HEK293 (cell line): ENCODE measurements at regions of chr1 and their contacts with region 1.

Region 1: DNA sequence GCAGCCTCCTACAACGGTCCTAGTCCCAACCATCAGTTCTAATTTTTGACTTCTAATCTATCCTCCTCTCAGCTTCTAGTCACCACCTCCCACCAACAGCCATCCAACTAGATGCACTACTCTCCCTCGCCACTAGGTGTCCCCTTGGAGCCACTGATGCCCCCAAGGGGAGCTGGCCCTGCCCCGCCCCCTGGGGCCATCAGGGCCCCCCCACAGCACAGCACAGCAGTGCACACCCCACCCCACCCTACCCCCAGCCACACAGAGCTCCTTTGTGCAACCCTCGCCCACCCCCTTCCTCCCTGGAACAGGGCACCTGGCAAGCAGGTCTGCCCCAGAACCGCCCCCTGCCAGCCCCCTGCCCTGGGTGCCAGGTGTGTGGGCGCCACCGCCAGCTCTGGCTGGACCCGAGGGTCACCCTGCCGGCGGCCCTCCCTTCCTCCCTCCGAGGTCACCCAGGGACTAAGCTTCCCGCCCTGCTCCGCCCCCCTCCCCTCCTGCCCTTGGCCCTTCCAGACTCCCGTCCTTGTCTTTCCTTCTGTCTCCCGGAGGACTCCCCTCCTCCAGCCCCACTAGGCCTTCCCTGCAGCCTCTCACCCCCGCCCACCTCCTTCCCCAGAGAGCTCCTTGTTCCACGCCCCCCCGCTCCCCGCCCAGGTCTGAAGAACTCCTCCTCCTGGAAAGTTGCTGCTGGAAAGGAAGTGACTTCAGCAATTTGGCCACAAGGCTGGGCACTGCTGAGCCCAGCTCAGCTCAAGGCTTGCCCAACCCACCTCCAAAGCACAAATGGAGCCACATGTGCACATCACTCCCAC is 47.0 kb downstream of the AHDC1 start:
- H3K4me3 ChIP-seq: peak overlapping the region; percentile 10
- H3K27ac ChIP-seq: no peak overlapping the region
- H3K4me1 ChIP-seq: no peaks in the 10 kb centered on the region
- CTCF ChIP-seq: peak; percentile 85

Region 2: DNA sequence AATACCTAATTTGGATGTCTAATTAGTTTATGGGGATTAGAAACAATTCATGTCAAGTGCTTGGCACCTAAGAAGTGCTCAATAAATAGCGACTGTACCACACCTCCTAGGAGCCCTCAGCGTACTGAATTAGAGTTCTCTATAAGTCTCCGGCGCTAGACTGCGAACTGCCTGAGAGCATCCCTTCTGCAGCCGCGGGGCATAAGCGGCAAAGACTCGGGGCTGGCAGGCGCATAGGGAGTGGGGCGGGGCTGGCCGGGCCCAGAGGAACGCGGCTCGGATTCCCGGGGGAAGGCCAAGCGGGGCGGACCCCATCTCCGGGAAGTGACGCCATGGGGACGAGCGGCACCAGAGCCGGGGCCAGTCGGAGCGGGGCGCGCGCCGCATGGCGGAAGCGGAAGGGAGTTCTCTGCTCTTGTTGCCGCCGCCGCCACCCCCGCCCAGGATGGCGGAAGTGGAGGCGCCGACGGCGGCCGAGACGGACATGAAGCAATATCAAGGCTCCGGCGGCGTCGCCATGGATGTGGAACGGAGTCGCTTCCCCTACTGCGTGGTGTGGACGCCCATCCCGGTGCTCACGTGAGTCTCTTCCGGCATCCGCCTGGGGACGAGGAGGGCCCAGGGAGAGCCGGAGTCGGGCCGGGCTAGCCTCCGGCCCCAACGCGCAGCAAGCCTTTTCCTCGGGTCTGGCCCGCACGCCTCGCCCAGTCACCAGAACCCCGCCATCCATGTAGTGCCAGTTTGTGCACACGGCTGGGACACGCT is 235.0 kb before region 1 on chr1 and contains the start of gene TMEM222:
- CTCF ChIA-PET with region 1: no interaction called
- POLR2A ChIA-PET with region 1: no interaction called
- H3K4me3 ChIP-seq: peak within 1 kb of the TSS; percentile 88
- H3K27ac ChIP-seq: peak within 1 kb of the TSS; percentile 81
- H3K4me1 ChIP-seq: no peaks in the 10 kb centered on the region
- CTCF ChIP-seq: peak; percentile 61

Region 3: DNA sequence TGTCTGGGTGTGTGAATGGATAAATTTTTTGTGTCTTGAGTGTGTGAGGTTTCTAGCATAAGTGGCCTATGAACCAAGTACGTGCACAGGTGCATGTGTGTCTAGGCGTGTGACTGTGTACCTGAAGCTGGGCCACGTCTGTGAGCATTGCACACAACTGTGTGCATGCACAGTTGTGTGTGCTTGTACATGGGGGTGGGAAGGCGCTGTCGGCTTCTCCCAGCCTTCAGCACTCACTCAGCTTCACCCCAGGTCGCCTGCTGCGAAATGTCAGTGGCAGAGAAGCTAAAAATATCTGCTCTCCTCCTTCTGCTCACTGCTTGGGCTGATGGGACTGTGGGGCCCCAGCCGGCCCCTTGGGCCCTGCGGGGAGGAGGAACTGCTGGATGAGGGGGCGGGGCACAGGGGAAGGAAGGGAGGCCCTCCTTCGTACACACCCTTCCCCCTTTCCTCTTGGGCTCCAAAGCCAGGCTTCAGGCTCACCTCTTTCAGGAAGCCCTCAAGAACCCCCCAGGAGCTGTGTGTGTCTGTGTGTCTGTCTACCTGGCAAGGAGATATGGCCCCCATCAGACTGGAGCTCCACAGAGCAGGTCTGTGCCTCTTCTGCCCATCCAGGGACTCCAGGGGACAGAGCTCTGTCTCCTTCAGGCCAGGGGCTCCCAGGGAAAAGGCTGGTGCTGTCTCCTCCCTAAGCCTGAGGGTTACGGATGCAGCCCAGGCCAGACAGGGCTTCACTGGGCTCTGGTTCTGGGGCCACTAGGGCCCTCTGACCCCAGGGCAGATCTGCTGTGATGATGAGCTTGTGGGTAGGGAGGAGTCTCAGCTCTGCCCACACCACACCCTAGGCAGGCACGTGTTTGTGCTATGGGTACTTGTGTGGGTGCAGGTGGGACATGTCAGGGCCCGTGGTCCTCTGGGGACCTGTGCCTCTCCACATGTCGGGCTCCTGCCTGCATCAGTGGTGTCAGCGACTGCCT is 31.4 kb before region 1 on chr1:
- CTCF ChIA-PET with region 1: interaction called, 13 read pairs
- POLR2A ChIA-PET with region 1: no interaction called
- H3K4me3 ChIP-seq: no peak overlapping the region
- H3K27ac ChIP-seq: peak overlapping the region; percentile 2; the same call in 1 of the 2 replicates
- H3K4me1 ChIP-seq: peaks cover 11% of the 10 kb centered on the region
- CTCF ChIP-seq: no peak

Region 4: DNA sequence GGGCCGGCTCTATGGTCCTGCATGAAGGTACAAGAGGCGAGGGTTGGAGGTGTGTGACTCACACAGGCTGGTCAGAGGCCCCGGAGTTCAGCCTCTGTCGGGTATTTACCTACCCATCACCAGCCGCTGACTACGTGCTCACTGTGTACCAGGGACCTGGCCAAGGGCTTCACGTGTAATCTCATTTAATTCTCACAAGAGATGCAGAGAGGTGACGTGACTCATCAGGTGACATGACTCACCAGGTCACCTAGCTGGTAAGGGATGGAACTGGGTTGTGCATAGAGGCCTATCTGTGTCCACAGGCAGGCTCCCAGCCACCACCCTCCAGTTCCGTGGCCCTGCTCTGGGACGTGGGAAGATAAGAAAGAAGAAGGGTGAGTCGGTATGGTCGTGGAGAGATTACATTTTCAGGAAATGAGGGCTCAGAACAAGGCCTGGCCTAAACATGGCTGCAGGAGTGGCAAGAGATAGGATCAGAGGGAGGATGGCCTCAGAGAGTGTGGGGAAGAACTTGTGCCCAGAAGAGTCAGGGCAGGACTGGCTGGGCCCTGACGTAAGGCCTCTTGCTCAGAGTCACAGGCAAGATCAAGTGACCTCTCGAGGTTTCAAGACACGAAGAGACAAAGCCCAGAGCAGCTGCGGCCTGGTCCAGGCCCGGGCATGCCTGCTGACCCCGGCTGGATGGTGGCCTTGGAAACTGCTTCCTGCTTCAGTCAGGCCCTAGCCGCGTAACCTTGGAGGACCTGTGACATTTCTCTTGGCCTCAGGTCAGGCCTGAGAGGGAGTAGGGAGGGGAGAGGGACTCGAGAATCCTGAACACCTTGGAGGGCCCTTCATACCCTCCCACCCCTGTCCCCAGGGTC is 14.3 kb before region 1 on chr1:
- CTCF ChIA-PET with region 1: interaction called, 22 read pairs
- POLR2A ChIA-PET with region 1: interaction called, 5 read pairs
- H3K4me3 ChIP-seq: no peak overlapping the region
- H3K27ac ChIP-seq: no peak overlapping the region
- H3K4me1 ChIP-seq: no peaks in the 10 kb centered on the region
- CTCF ChIP-seq: no peak

Region 5: GRCh38 chr1:27574871-27575831 is 18.2 kb after region 1 on chr1:
- CTCF ChIA-PET with region 1: interaction called, 111 read pairs
- POLR2A ChIA-PET with region 1: interaction called, 20 read pairs
- H3K4me3 ChIP-seq: peak overlapping the region; percentile 36
- H3K27ac ChIP-seq: peak overlapping the region; percentile 53
- H3K4me1 ChIP-seq: peaks cover 9% of the 10 kb centered on the region
- CTCF ChIP-seq: peak; percentile 93

Region 6: GRCh38 chr1:27662707-27663393 is 105.9 kb after region 1 on chr1:
- CTCF ChIA-PET with region 1: interaction called, 25 read pairs
- POLR2A ChIA-PET with region 1: interaction called, 4 read pairs
- H3K4me3 ChIP-seq: no peak overlapping the region
- H3K27ac ChIP-seq: no peak overlapping the region; the same call in 1 of the 2 replicates
- H3K4me1 ChIP-seq: no peaks in the 10 kb centered on the region
- CTCF ChIP-seq: peak; percentile 88

Region 7: GRCh38 chr1:27789540-27790041 is 232.6 kb after region 1 on chr1:
- CTCF ChIA-PET with region 1: no interaction called
- POLR2A ChIA-PET with region 1: no interaction called
- H3K4me3 ChIP-seq: no peak overlapping the region
- H3K27ac ChIP-seq: no peak overlapping the region
- H3K4me1 ChIP-seq: peaks cover 5% of the 10 kb centered on the region; the same call in 1 of the 2 replicates
- CTCF ChIP-seq: no peak